Left ventricle myocardium inferior (tissue), 1 donor: ENCODE measurements at regions of chr1 and their contacts with region 1.

Region 1: GRCh38 chr1:84442256-84442655 is 36.8 kb upstream of the RPF1 start:
- DNase-seq: no peak
- H3K4me3 ChIP-seq: no peak overlapping the region
- H3K27ac ChIP-seq: no peak overlapping the region
- H3K4me1 ChIP-seq: peaks cover 4% of the 10 kb centered on the region
- H3K27me3 ChIP-seq: peaks cover 12% of the 10 kb centered on the region
- CTCF ChIP-seq: peak; percentile 61

Region 2: GRCh38 chr1:84298328-84298683 is 143.9 kb before region 1 on chr1:
- intact Hi-C with region 1: no loop called
- DNase-seq: peak; percentile 66
- H3K4me3 ChIP-seq: peak overlapping the region; percentile 97
- H3K27ac ChIP-seq: peak overlapping the region; percentile 92
- H3K4me1 ChIP-seq: peaks cover 54% of the 10 kb centered on the region
- H3K27me3 ChIP-seq: no peaks in the 10 kb centered on the region
- CTCF ChIP-seq: no peak

Region 3: DNA sequence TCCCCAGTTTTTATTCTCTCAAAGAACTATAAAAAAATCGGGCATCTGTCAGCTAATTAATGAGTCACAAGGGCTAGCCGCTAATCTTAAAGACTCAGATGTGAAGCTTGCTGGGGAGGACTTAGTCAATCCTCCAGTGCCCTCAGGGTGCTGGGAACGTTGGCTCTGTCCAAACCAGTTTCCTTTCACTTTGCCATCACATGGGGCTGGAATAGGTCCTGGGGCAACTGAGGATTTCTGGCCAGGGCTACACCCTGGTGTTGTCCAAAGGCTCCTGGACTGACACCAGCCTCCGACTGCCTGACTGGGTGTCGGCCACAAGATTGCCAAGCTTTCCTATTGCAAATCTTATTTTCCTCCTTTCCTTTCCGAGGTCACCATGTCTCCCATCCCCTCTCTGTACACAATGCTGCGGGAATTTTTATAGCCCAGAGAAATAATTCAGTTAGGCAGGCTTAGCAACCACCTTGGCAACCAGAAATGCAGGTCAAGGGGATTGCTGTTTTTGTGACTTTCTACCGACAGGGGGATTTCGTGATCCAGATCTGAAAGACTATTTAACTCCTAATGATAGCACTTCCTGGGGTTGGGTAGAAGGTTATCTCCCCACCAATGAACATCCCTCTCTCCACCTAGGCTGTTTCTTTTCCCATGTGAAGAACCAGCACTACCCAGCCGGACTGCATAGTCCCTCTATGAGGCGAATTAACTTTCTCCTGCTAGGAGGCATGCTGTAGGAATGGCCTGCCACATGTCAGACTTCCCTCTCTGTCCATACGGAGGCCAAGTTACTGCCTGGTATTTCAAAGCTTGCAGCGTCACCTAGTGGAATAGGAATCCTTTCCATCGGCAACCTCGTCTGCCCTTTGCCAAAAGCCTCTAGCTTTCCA is 161.9 kb after region 1 on chr1:
- intact Hi-C with region 1: loop called (anchors 10 kb)
- DNase-seq: peak; percentile 23
- H3K4me3 ChIP-seq: peak overlapping the region; percentile 53
- H3K27ac ChIP-seq: peak overlapping the region; percentile 52
- H3K4me1 ChIP-seq: peaks cover 30% of the 10 kb centered on the region
- H3K27me3 ChIP-seq: no peaks in the 10 kb centered on the region
- CTCF ChIP-seq: peak; percentile 67